HepG2 (cell line): ENCODE measurements at regions of chr9 and their contacts with region 1.

Region 1: DNA sequence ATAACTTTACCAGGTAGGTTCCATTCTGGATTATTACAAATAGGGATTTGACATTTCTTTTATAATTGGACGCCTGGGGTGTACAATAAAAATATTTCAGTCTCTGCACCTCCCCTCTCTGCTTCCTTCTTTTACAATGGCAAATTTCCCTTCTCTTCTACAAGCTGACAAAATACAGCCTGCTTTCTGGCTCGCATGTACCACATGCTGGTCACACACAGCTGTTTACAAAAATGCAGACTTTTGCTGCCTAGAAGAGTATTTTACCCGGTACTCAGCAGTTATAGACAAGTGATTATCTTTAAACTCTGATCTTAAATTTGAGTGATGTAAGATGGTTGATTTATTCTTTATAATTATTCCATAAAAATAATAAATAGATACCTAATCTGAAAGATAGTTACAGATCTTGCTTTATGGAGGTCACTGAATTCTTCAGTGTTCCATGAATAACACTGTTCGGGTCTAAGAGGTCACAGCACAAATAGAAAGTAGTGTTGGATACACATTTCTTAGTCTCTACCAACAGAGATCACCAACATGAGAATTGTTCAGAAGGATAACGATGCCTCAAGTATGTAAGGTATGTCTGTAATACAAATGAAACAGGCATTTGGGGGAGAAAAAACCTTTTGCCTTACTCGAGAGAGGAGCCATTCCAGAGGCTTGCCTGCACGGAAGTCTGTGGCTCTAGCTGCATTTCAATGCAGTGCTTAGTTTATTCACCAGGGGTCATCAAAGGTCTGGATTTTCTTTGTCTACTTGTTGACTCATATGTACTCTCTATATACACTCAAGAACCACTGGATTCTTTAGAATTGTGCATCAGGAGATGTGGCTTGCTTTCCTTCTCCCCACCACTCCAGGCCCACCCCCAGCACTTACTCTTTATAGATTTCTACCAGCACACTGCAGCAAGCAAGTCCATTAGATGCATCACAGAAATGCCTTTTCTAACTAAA is 206.6 kb upstream of the RFX3 start:
- DNase-seq: peak; percentile 70
- ATAC-seq: peak; percentile 100
- H3K4me3 ChIP-seq: peak overlapping the region; percentile 10 to 40 (median 34); a peak in 4 of 6 replicates
- H3K27ac ChIP-seq: no peak overlapping the region
- H3K4me1 ChIP-seq: no peaks in the 10 kb centered on the region
- H3K27me3 ChIP-seq: no peaks in the 10 kb centered on the region
- CTCF ChIP-seq: peak; percentile 82
- EP300 ChIP-seq: no peak; a peak in 1 of 4 replicates
- POLR2A ChIP-seq: no peak
- RAD21 ChIP-seq: peak; percentile 85

Region 2: DNA sequence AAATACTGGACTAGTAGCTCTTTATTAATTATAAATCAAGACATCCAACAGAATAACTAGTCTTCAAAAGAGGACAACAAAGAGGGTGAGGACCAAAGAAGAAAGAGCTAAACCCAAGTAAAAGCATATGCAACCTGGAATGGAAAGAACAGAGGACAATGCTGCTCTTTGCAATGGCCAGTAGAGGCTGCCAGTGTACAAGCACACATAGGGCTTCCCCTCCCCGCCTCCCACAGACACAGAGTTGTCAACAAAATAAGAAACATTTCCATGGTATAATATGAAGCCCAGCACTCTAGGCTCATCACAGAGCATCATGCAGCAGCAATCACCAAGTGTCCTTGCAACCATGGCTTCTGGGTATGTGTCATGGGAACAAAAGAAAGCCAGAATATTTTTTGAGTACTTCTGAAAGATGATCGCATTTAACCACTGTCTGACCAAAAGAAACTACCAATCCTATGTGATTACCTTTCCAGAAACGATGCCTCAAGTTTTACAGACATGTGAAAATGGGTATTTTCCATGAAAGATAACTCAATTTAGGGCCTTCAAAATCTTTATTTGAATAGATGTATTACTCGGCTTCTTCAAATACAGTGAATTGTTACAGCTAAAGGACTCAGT is 264.7 kb before region 1 on chr9:
- CTCF ChIA-PET with region 1: no interaction called
- POLR2A ChIA-PET with region 1: no interaction called
- in situ Hi-C with region 1: no loop called
- intact Hi-C with region 1: loop called (anchors 1 kb)
- DNase-seq: peak; percentile 63
- ATAC-seq: peak; percentile 100
- H3K4me3 ChIP-seq: no peak overlapping the region
- H3K27ac ChIP-seq: no peak overlapping the region
- H3K4me1 ChIP-seq: no peaks in the 10 kb centered on the region
- H3K27me3 ChIP-seq: no peaks in the 10 kb centered on the region
- CTCF ChIP-seq: peak; percentile 85
- EP300 ChIP-seq: no peak
- POLR2A ChIP-seq: no peak
- RAD21 ChIP-seq: peak; percentile 63; the same call in 1 of the 2 replicates

Region 3: DNA sequence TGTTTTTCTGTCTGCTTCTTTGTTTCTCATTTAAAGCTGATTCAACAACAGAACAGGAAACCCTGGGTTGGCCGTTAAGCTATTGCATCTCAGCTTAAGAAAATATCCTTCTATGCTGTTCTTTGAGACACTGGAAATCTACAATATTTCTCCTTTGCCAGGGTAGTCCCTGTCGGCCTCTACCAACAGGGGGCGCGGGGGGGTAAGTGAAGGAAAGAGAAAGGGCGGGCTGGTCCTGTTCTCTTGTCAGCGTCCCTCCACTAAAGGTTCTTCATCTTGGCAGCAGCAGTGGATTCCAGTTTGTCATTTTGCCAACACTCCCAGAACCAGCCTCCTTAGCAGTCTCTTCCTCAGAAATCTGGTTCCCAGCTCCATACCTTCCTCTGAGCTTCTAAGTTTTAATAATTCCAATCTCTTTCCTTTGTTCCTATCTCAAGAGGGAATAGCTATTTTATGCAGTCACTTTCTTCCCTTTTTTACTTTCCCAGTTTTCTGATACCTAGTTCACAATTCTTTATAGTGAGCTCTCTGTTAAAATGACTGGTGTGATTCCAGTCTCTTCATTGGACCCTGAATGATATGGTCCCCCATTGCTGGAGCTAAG is 345.2 kb after region 1 on chr9:
- CTCF ChIA-PET with region 1: no interaction called
- POLR2A ChIA-PET with region 1: no interaction called
- in situ Hi-C with region 1: no loop called
- intact Hi-C with region 1: loop called (anchors 1 kb)
- DNase-seq: peak; percentile 10
- ATAC-seq: peak; percentile 86
- H3K4me3 ChIP-seq: no peak overlapping the region
- H3K27ac ChIP-seq: no peak overlapping the region
- H3K4me1 ChIP-seq: no peaks in the 10 kb centered on the region
- H3K27me3 ChIP-seq: 0 out of 5 replicates have a peak, but pooled peaks cover 0 to 1% of the 10 kb centered on the region in 2 experiments
- CTCF ChIP-seq: peak; percentile 68
- EP300 ChIP-seq: no peak
- POLR2A ChIP-seq: no peak
- RAD21 ChIP-seq: no peak

Region 4: DNA sequence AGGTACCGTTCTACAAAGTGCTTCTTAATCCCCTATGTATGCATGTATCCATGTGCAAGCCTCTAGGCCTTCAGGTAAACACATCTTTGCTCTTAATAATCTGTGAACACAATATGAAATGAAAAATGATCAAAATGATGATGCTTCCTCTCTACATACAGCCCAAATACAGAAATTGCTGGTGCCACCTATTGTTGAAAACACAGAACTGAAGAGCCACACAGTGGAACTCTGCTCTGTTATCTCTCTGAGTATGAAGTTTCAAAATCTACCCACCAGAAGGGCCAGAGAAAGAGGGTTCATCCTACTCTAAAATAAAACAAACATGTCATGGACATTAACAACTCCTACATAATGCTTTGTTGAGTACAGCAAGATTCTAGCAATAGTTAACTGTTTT is 496.2 kb after region 1 on chr9:
- CTCF ChIA-PET with region 1: no interaction called
- POLR2A ChIA-PET with region 1: no interaction called
- in situ Hi-C with region 1: no loop called
- intact Hi-C with region 1: loop called (anchors 1 kb)
- DNase-seq: no peak
- ATAC-seq: peak; percentile 63; the same call in 2 of the 3 replicates
- H3K4me3 ChIP-seq: no peak overlapping the region
- H3K27ac ChIP-seq: no peak overlapping the region
- H3K4me1 ChIP-seq: no peaks in the 10 kb centered on the region
- H3K27me3 ChIP-seq: no peaks in the 10 kb centered on the region; a peak in 1 of 5 replicates
- CTCF ChIP-seq: peak; percentile 39; the same call in 1 of the 2 replicates
- EP300 ChIP-seq: no peak
- POLR2A ChIP-seq: no peak
- RAD21 ChIP-seq: no peak

Region 5: GRCh38 chr9:4366591-4367330 is 634.4 kb after region 1 on chr9:
- CTCF ChIA-PET with region 1: interaction called, 8 read pairs
- POLR2A ChIA-PET with region 1: no interaction called
- in situ Hi-C with region 1: no loop called
- intact Hi-C with region 1: loop called (anchors 1 kb)
- DNase-seq: peak; percentile 10
- ATAC-seq: peak; percentile 52; the same call in 2 of the 3 replicates
- H3K4me3 ChIP-seq: no peak overlapping the region
- H3K27ac ChIP-seq: no peak overlapping the region
- H3K4me1 ChIP-seq: no peaks in the 10 kb centered on the region
- H3K27me3 ChIP-seq: no peaks in the 10 kb centered on the region
- CTCF ChIP-seq: peak; percentile 71
- EP300 ChIP-seq: 0 out of 4 replicates have a peak, but pooled peaks of 1 of the 2 experiments have one; percentile 14
- POLR2A ChIP-seq: no peak
- RAD21 ChIP-seq: peak; percentile 51; the same call in 1 of the 2 replicates